PC-9 (cell line): ENCODE measurements at regions of chrX and their contacts with region 1.

Region 1: GRCh38 chrX:70454441-70455365 is 10.1 kb downstream of the DLG3 start:
- DNase-seq: peak; percentile 90 to 94
- H3K4me3 ChIP-seq: peak overlapping the region; percentile 83
- H3K27ac ChIP-seq: peak overlapping the region; percentile 57
- H3K4me1 ChIP-seq: peaks cover 35% of the 10 kb centered on the region
- H3K27me3 ChIP-seq: no peaks in the 10 kb centered on the region
- CTCF ChIP-seq: peak; percentile 93

Region 2: DNA sequence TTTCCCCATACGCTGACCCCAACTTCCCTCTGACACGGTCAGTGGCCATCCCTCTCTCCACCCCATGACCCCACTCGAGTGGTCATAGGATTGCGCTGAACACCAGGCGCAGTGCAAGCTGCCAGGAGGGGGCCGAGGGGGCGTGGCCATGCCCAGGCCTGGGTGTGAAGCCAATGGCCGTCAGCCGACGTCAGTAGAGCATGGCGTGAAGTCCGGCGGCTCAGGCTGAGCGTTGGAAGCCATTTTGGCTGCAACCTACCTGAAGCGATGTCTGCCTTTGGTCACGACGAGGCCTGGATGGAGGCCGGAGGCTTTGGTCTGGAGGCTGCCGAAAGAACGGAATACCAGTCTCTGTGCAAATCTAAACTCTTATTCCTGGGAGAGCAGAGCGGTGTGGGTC is 172.8 kb before region 1 on chrX and contains the start of gene RAB41:
- CTCF ChIA-PET with region 1: no interaction called
- POLR2A ChIA-PET with region 1: no interaction called
- intact Hi-C with region 1: no loop called
- DNase-seq: no peak
- H3K4me3 ChIP-seq: no peak within 1 kb of the TSS
- H3K27ac ChIP-seq: no peak within 1 kb of the TSS
- H3K4me1 ChIP-seq: no peaks in the 10 kb centered on the region
- H3K27me3 ChIP-seq: no peaks in the 10 kb centered on the region
- CTCF ChIP-seq: no peak
- total RNA-seq, gene RAB41: not detected in 2 replicates

Region 3: GRCh38 chrX:70466968-70467367 is 12.3 kb after region 1 on chrX:
- CTCF ChIA-PET with region 1: no interaction called
- POLR2A ChIA-PET with region 1: no interaction called
- intact Hi-C with region 1: no loop called
- DNase-seq: no peak
- H3K4me3 ChIP-seq: no peak overlapping the region
- H3K27ac ChIP-seq: no peak overlapping the region
- H3K4me1 ChIP-seq: 0 out of 2 replicates have a peak, but pooled peaks cover 6% of the 10 kb centered on the region
- H3K27me3 ChIP-seq: no peaks in the 10 kb centered on the region
- CTCF ChIP-seq: no peak

Region 4: DNA sequence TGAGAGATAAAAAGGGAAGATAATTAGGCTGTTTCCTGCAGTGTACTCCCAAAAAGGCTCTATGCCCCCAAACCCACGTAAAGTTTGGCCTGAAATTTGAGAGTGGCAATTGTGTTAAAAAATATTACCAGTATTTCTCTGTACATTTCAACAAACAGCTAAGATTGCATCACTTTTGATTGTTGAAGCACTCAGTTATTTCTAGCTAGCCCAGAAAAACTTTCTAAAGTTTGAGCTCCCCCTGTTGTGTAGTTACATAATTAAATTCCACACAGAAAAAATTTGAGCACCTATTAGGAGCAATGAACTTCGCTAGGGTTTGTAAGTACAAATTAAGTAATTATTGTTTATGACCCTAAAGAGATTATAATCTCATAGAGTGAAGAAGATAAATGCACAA is 99.4 kb after region 1 on chrX:
- CTCF ChIA-PET with region 1: interaction called, 13 read pairs
- POLR2A ChIA-PET with region 1: no interaction called
- intact Hi-C with region 1: no loop called
- DNase-seq: peak in 1 of 2 experiments; percentile 35
- H3K4me3 ChIP-seq: no peak overlapping the region
- H3K27ac ChIP-seq: peak overlapping the region; percentile 66
- H3K4me1 ChIP-seq: peaks cover 12% of the 10 kb centered on the region
- H3K27me3 ChIP-seq: no peaks in the 10 kb centered on the region
- CTCF ChIP-seq: peak; percentile 52; the same call in 1 of the 2 replicates

Region 5: DNA sequence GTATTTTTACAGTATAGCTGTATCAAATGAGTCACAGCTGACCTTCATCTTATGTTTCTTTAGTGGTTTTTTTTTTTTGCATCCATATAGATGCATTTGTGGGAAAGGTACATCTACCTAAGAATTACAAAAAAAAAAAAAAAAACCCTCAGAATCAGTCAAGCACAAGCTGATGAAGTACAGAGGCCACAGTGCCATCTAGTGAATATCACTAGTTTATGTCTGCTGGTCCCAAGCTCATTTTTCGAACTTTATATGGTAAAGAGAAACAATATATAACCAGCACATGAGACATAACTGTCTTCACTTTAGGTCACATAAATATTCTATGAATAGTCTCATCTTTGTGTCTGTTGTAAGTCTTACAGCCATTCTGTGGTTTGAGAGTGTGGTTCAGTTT is 210.0 kb after region 1 on chrX:
- CTCF ChIA-PET with region 1: no interaction called
- POLR2A ChIA-PET with region 1: no interaction called
- intact Hi-C with region 1: loop called (anchors 10 kb)
- DNase-seq: no peak
- H3K4me3 ChIP-seq: no peak overlapping the region
- H3K27ac ChIP-seq: no peak overlapping the region
- H3K4me1 ChIP-seq: no peaks in the 10 kb centered on the region
- H3K27me3 ChIP-seq: no peaks in the 10 kb centered on the region
- CTCF ChIP-seq: peak; percentile 50